ENCODE measurements at regions of chr3 and their contacts with region 1.

Region 1: DNA sequence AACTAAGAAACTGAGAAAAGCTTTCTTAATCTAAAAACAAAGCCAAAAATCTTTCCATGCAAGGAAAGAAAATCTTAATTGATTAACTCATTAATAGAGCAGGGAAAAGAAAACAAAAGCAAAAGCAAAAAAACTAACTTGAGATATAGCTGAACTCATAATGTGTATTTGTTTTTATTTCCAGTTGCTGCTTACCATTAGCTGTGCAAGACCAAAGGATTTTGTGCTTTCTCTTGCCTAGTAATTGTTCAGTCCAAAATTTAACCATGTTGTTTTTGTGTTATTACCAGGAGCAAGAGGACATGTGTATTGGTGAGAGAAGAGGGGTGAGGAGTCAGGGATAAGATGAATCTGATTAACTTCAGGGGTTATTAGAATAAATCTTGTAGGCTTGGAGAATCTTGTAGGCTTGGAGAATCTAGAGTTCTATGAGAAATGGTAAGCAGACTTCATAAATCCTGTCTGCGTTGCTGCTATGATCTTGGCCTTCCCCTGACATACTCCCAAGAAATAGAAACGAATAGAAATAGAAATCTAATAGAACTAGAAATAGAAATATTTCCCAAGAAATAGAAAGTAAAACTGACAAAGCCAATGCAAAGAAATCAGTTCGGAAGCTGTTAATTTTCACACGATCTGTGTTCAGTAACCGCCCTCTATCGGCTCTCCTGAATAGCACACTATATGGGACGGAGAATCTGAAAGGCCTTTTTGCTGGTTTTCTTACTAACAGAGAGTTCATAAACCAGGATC is 72.6 kb upstream of the TNFSF10 start:
- DNase-seq: peak; percentile 50 to 72 (median 67)
- H3K4me3 ChIP-seq: peak overlapping the region in 1 of 2 donors; percentile 44
- H3K4me3 Mint-ChIP-seq: peak overlapping the region; percentile 77 to 93 (median 89)
- H3K27ac ChIP-seq: peak overlapping the region; percentile 54
- H3K27ac Mint-ChIP-seq: peak overlapping the region; percentile 79 to 96 (median 92)
- H3K4me1 ChIP-seq: peaks cover 48% of the 10 kb centered on the region
- H3K4me1 Mint-ChIP-seq: peaks cover 35 to 58% (median 48%) of the 10 kb centered on the region in 4 donors
- H3K27me3 ChIP-seq: no peaks in the 10 kb centered on the region
- H3K27me3 Mint-ChIP-seq: no peaks in the 10 kb centered on the region

Region 2: DNA sequence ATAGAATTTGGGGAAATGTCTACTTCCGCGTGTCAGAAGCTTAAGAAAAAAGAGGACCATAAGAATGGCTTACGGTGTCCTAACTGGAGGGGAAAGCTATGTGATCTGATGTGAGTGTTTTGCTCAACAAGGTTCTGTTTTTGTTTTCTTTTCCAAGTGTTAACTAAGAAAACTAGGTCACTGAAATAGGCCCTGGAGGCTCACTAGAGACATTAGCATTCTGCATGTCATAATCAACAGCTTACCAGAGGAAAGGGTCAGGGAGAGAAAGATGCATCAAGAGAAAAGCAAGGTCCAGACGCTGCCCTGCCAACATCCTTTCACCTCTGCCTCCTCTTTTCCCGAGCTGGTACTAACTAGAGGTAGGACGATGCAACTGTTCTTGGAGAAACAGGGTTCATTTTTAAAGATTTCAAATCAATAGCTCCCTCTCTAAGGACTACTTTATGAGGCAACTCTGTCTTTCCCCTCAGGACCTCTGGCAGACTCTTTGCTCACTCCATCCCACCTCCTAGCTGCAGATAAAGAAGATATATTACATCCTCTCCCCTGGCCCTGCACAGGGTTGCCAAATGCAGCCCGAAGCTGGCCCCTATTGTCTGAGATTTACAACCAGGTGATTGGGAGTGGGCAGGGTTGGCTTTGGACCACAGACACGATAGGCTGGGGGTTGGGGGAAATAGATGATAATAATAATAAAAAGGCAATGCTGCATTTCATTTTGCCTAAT is 1359.4 kb before region 1 on chr3:
- CTCF ChIA-PET with region 1: no interaction called
- POLR2A ChIA-PET with region 1: no interaction called
- intact Hi-C with region 1: no loop called
- DNase-seq: no peak
- H3K4me3 ChIP-seq: no peak overlapping the region
- H3K4me3 Mint-ChIP-seq: no peak overlapping the region
- H3K27ac ChIP-seq: no peak overlapping the region
- H3K27ac Mint-ChIP-seq: peak overlapping the region in 1 of 7 donors; percentile 66
- H3K4me1 ChIP-seq: peaks cover 9% of the 10 kb centered on the region
- H3K4me1 Mint-ChIP-seq: peaks cover 29 to 45% (median 31%) of the 10 kb centered on the region in 4 donors
- H3K27me3 ChIP-seq: no peaks in the 10 kb centered on the region
- H3K27me3 Mint-ChIP-seq: no peaks in the 10 kb centered on the region

Region 3: DNA sequence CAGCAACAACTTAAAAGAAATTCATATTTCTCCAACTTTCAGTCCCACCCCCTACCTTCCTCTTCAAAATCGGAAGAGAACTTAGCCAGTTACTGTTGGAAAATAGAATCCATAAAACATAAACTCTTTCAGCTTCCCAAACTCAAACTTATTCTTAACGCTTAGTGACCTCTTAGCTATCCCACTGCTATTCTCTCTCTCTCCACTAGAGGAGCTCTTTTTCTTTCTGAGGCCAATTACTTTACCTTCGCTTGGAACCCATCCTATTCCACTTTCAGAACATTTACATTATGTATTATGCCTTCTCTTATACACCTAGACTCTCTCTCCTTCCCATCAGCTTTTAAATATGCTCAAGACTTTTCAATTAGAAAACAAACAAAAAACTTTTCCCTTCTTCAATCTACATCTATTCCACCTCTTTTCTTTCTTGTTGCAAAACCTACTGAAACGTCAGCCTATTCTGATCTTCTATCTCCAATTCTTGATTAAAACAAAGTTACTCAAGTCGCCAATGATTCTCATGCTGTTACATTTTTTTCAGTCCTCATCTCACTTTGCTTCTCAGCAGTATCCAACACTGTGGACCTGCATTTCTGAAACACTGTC is 134.2 kb before region 1 on chr3:
- CTCF ChIA-PET with region 1: interaction called, 51 read pairs
- POLR2A ChIA-PET with region 1: interaction called, 3 read pairs
- intact Hi-C with region 1: loop called (anchors 1 kb)
- DNase-seq: peak in 4 of 5 donors; percentile 20 to 39 (median 28)
- H3K4me3 ChIP-seq: no peak overlapping the region
- H3K4me3 Mint-ChIP-seq: no peak overlapping the region
- H3K27ac ChIP-seq: no peak overlapping the region
- H3K27ac Mint-ChIP-seq: no peak overlapping the region
- H3K4me1 ChIP-seq: no peaks in the 10 kb centered on the region
- H3K4me1 Mint-ChIP-seq: peaks cover 0 to 3% (median 1%) of the 10 kb centered on the region in 4 donors
- H3K27me3 ChIP-seq: no peaks in the 10 kb centered on the region
- H3K27me3 Mint-ChIP-seq: peaks cover 0 to 2% of the 10 kb centered on the region in 2 donors

Region 4: GRCh38 chr3:172511783-172512762 is 83.7 kb before region 1 on chr3:
- CTCF ChIA-PET with region 1: interaction called, 174 read pairs
- POLR2A ChIA-PET with region 1: interaction called, 166 read pairs
- intact Hi-C with region 1: loop called (anchors 5 kb)
- DNase-seq: peak; percentile 46 to 76 (median 58)
- H3K4me3 ChIP-seq: peak overlapping the region in 1 of 2 donors; percentile 22
- H3K4me3 Mint-ChIP-seq: peak overlapping the region; percentile 61 to 91 (median 82)
- H3K27ac ChIP-seq: peak overlapping the region; percentile 50
- H3K27ac Mint-ChIP-seq: peak overlapping the region; percentile 91 to 98 (median 95)
- H3K4me1 ChIP-seq: peaks cover 73% of the 10 kb centered on the region
- H3K4me1 Mint-ChIP-seq: peaks cover 59 to 90% (median 74%) of the 10 kb centered on the region in 4 donors
- H3K27me3 ChIP-seq: no peaks in the 10 kb centered on the region
- H3K27me3 Mint-ChIP-seq: no peaks in the 10 kb centered on the region

Region 5: DNA sequence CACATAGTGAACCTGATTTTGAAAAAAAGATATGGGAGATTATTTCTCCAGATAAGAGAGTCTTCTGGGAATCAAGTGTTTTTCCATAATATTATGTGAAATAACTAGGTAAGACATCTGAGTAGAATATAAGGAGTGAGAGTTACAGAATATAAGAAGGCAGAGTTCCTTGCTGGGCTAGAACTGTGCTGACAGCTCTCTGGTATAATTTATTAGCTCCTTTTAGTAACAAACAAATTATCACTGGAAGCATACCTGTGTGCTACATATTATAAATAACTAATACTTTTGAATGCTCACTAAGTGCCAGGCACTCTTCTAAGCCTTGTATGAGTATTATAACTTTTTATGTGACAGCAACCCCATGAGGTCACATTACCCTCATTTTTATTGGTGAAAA is 53.7 kb before region 1 on chr3:
- CTCF ChIA-PET with region 1: interaction called, 12 read pairs
- POLR2A ChIA-PET with region 1: no interaction called
- intact Hi-C with region 1: no loop called
- DNase-seq: no peak
- H3K4me3 ChIP-seq: no peak overlapping the region
- H3K4me3 Mint-ChIP-seq: no peak overlapping the region
- H3K27ac ChIP-seq: no peak overlapping the region
- H3K27ac Mint-ChIP-seq: no peak overlapping the region
- H3K4me1 ChIP-seq: peaks cover 36% of the 10 kb centered on the region
- H3K4me1 Mint-ChIP-seq: peaks cover 23 to 47% (median 33%) of the 10 kb centered on the region in 4 donors
- H3K27me3 ChIP-seq: no peaks in the 10 kb centered on the region
- H3K27me3 Mint-ChIP-seq: no peaks in the 10 kb centered on the region

Region 6: GRCh38 chr3:172580680-172581401 is 15.0 kb before region 1 on chr3:
- CTCF ChIA-PET with region 1: interaction called, 20 read pairs
- POLR2A ChIA-PET with region 1: interaction called, 16 read pairs
- intact Hi-C with region 1: no loop called
- DNase-seq: no peak
- H3K4me3 ChIP-seq: no peak overlapping the region
- H3K4me3 Mint-ChIP-seq: peak overlapping the region; percentile 47 to 87 (median 74)
- H3K27ac ChIP-seq: peak overlapping the region; percentile 44
- H3K27ac Mint-ChIP-seq: peak overlapping the region; percentile 73 to 95 (median 89)
- H3K4me1 ChIP-seq: peaks cover 74% of the 10 kb centered on the region
- H3K4me1 Mint-ChIP-seq: peaks cover 59 to 88% (median 79%) of the 10 kb centered on the region in 4 donors
- H3K27me3 ChIP-seq: no peaks in the 10 kb centered on the region
- H3K27me3 Mint-ChIP-seq: no peaks in the 10 kb centered on the region

Region 7: DNA sequence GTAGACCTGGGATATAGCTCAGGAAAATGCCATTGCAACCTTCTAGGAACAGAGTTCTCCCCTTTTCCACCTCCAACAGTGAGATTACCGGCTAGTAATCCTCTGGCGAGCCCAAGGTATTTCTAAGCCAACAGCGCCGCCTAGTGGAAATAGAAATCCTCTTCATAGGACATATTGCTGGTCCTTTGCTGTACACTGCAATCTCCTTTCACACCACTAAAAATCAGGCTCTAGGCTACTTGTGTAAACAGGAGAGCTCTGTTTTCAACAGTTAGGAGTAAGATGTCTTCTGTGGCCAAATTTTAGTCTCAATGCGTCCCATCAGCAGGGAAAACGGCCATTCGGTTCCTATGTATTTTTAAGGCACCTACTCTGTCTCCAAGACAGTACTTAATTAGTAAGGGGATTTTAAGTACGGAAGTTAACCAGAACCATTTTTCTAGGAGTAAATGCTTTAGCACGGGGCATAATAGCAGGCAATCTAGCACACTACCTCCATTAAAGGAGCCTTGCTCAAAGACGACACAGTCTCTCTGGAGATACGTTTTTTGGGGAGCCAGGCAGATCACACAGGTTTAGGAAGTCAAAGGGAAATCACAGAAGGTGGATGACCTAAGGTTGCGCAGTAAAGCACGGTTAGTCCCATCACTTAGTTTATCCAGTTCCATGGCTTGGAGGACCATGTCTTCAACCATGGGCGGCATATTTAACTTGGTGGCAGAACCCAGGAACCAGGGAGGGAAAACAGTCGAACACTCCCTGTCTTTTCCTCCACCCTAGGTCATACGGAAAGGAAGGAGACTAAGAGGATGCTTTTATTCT is 71.3 kb after region 1 on chr3:
- CTCF ChIA-PET with region 1: interaction called, 45 read pairs
- POLR2A ChIA-PET with region 1: interaction called, 4 read pairs
- intact Hi-C with region 1: loop called (anchors 2 kb)
- DNase-seq: peak; percentile 75 to 79 (median 78)
- H3K4me3 ChIP-seq: no peak overlapping the region
- H3K4me3 Mint-ChIP-seq: peak overlapping the region in 7 of 8 donors; percentile 11 to 64 (median 33)
- H3K27ac ChIP-seq: no peak overlapping the region
- H3K27ac Mint-ChIP-seq: peak overlapping the region in 4 of 7 donors; percentile 18 to 76 (median 53)
- H3K4me1 ChIP-seq: peaks cover 17% of the 10 kb centered on the region
- H3K4me1 Mint-ChIP-seq: peaks cover 10 to 31% (median 21%) of the 10 kb centered on the region in 4 donors
- H3K27me3 ChIP-seq: no peaks in the 10 kb centered on the region
- H3K27me3 Mint-ChIP-seq: peaks cover 1 to 2% of the 10 kb centered on the region in 2 donors

Region 8: DNA sequence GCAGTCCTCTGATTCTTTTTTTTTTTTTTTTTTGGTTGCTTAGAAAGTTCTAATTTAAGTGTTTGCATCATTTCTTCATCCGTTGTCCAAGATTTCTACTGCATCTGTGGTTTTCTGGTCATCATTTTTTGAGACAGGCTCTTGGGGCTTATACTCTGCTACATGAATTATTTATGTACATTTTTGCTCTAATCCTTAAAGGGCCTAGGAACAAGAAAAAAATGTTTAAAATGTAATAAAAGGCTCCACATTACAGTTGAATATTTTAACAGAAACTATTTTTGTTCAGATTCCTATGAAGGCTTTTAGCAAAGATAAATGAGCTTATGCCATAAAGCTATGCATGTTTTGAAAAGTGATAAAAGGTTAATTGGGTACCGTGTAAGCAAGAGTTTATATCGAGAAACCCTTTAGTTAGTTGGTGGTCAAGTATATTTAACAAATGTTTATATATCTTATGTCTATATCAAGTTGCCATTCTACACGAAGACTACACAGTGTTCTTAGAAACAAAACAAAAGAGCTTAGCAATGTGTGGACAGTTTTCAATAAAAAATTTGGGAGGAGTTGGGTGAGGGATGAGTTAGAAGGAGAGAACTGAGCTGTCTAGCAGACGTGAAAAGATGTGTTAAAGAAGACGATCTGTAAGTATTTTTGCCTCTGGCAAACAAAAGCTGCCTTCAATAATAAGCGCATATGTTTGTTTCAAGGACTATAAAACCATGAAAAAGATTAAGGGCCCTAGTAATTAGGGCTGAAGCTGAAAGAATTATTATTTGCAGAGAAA is 1699.7 kb after region 1 on chr3:
- CTCF ChIA-PET with region 1: no interaction called
- POLR2A ChIA-PET with region 1: no interaction called
- intact Hi-C with region 1: no loop called
- DNase-seq: no peak
- H3K4me3 ChIP-seq: no peak overlapping the region
- H3K4me3 Mint-ChIP-seq: no peak overlapping the region
- H3K27ac ChIP-seq: no peak overlapping the region
- H3K27ac Mint-ChIP-seq: no peak overlapping the region
- H3K4me1 ChIP-seq: no peaks in the 10 kb centered on the region
- H3K4me1 Mint-ChIP-seq: no peaks in the 10 kb centered on the region
- H3K27me3 ChIP-seq: no peaks in the 10 kb centered on the region
- H3K27me3 Mint-ChIP-seq: peaks cover 0 to 1% of the 10 kb centered on the region in 2 donors

Measured in CD4-positive, alpha-beta memory T cell (primary cell).